HCT116 (cell line): ENCODE measurements at regions of chr7 and their contacts with region 1.

Region 1: DNA sequence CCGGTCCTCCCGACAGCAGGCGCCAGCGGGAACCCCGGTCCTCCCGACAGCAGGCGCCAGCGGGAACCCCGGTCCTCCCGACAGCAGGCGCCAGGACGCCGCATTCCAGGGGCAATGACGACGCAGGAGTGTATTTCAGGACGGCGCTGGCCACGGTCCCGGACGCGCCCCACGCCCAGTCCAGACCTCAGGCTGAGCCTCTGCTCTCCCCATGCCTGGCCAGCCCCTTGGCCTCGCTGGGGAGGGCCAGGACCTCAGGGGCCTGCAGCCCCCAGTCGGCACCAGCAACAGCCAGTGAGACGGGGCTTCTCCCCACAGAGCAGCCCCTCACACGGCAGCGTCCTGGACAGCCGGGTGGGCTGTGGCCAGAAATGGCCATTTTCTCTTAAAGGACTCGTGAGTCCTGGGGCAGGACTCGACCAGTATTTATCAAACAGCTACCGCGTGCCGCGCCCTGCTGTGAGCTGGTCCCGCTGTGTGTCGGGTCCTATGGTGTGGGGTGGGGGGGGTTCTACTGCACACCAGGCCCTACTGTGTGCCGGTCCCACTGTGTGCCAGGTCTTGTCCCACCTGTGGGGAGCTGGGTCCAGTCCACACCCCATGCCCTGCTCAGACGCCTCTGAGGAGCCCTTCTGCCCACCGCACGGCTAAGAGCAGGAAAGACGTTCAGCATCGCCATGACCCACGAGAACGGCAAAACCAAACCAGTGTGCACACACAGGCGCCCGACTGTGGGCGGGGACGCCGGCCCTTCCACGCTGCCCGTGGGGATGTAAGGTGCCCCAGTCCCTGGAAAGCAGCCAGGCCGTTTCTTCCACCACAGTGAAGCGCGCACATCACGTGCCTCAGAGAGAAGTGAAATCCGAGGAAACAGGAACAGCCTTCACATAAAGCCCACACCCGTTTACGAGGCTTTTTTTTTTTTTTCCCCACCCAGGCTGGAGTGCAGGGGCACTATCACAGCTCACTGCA is 33.3 kb downstream of the GET4 start:
- DNase-seq: no peak
- ATAC-seq: peak; percentile 58
- H3K4me3 ChIP-seq: peak overlapping the region; percentile 27 to 48
- H3K27ac ChIP-seq: peak overlapping the region; percentile 54; the same call in 1 of the 2 replicates
- H3K4me1 ChIP-seq: peaks cover 6 to 20% of the 10 kb centered on the region in 2 experiments
- H3K27me3 ChIP-seq: 0 out of 2 replicates have a peak, but pooled peaks cover 2% of the 10 kb centered on the region
- CTCF ChIP-seq: no peak
- POLR2A ChIP-seq: no peak
- RAD21 ChIP-seq: no peak

Region 2: GRCh38 chr7:954330-955238 is 44.9 kb after region 1 on chr7 and contains the start of gene ADAP1:
- CTCF ChIA-PET with region 1: no interaction called
- POLR2A ChIA-PET with region 1: no interaction called
- RAD21 ChIA-PET with region 1: no interaction called
- intact Hi-C with region 1: loop called (anchors 2 kb)
- DNase-seq: no peak
- ATAC-seq: peak; percentile 77
- H3K4me3 ChIP-seq: peak within 1 kb of the TSS; percentile 57 to 69
- H3K27ac ChIP-seq: peak within 1 kb of the TSS; percentile 65
- H3K4me1 ChIP-seq: peaks cover 2 to 28% of the 10 kb centered on the region in 2 experiments; a peak in 3 of 4 replicates
- H3K27me3 ChIP-seq: no peaks in the 10 kb centered on the region
- CTCF ChIP-seq: peak in 1 of 3 experiments; percentile 4; a peak in 1 of 6 replicates
- POLR2A ChIP-seq: no peak
- RAD21 ChIP-seq: no peak
- total RNA-seq, gene ADAP1: 34.0 TPM